ENCODE measurements at regions of chr5 and their contacts with region 1.

Region 1: GRCh38 chr5:161230221-161230620 is 316.3 kb downstream of the GABRB2 start:
- DNase-seq: peak; percentile 8
- H3K4me3 ChIP-seq: no peak overlapping the region
- H3K27ac ChIP-seq: no peak overlapping the region
- H3K4me1 ChIP-seq: no peaks in the 10 kb centered on the region
- H3K27me3 ChIP-seq: no peaks in the 10 kb centered on the region
- CTCF ChIP-seq: no peak

Region 2: DNA sequence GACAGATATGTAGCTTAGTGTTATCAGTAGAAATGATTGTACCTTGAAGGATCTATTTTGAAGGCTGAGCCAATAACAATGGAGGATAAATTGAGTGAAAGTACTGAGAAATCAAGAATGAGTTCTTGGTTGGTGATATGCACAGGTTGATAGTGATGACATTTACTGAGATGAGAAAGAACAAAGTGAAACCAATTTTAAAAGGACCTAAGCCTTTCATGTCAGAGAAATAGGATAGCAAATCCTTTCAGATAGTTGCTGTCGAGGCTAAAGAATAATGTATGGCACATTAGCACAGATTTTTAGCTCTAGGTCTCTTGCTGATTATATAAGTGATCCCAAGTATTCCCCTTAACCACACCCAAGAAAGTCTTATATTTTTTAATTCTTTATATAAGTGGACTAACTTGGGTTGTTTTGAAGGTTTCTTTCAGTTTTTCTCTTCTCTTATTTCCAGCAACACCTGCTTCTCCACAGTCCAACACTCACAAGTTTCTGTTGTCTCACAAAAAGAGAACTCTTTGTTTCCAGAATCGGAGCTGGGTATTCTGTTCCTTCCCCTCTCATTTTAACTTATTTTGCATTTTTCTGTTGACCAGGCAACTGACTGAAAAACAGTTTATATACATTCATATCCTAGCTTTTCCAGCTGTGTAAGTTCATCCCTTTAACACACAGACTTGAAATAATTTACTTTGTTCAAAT is 91.3 kb before region 1 on chr5:
- CTCF ChIA-PET with region 1: no interaction called
- dilution Hi-C with region 1: loop called (anchors 5 kb)
- in situ Hi-C with region 1: no loop called
- intact Hi-C with region 1: no loop called
- DNase-seq: no peak
- H3K4me3 ChIP-seq: no peak overlapping the region
- H3K27ac ChIP-seq: no peak overlapping the region
- H3K4me1 ChIP-seq: no peaks in the 10 kb centered on the region
- H3K27me3 ChIP-seq: no peaks in the 10 kb centered on the region
- CTCF ChIP-seq: no peak

Region 3: DNA sequence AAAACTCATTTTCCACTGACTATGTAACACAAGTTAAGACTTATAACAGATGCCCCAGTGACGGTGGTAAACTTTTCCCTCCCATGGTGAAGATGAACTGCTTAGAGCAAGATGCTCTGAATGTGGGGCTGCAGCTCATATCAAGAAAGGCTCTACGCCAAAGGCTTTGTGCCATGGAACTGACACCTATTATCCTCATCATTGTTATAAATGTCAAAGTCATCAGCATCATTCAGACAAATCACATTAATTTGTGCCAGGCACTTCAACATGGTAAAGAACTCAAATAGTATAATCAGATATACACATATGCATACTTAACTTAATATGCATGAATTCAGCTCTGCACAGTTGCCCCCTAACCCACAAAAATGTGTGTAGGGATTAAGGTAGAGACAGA is 72.3 kb before region 1 on chr5:
- CTCF ChIA-PET with region 1: no interaction called
- dilution Hi-C with region 1: no loop called
- in situ Hi-C with region 1: no loop called
- intact Hi-C with region 1: no loop called
- DNase-seq: no peak
- H3K4me3 ChIP-seq: no peak overlapping the region
- H3K27ac ChIP-seq: no peak overlapping the region
- H3K4me1 ChIP-seq: no peaks in the 10 kb centered on the region
- H3K27me3 ChIP-seq: no peaks in the 10 kb centered on the region
- CTCF ChIP-seq: no peak